ENCODE measurements at regions of chr16 and their contacts with region 1.

Region 1: GRCh38 chr16:9536905-9537304 is 445.5 kb downstream of the HAPSTR1 start:
- DNase-seq: no peak
- H3K4me3 ChIP-seq: no peak overlapping the region
- H3K27ac ChIP-seq: no peak overlapping the region
- H3K27me3 ChIP-seq: no peaks in the 10 kb centered on the region
- CTCF ChIP-seq: no peak

Region 2: GRCh38 chr16:10729104-10730048 is 1192.5 kb after region 1 on chr16:
- CTCF ChIA-PET with region 1: no interaction called
- POLR2A ChIA-PET with region 1: interaction called, 13 read pairs
- DNase-seq: no peak
- H3K4me3 ChIP-seq: no peak overlapping the region
- H3K27ac ChIP-seq: no peak overlapping the region
- H3K27me3 ChIP-seq: no peaks in the 10 kb centered on the region
- CTCF ChIP-seq: no peak

Measured in AG04450 (cell line).